ENCODE measurements at regions of chr6 and their contacts with region 1.

Region 1: DNA sequence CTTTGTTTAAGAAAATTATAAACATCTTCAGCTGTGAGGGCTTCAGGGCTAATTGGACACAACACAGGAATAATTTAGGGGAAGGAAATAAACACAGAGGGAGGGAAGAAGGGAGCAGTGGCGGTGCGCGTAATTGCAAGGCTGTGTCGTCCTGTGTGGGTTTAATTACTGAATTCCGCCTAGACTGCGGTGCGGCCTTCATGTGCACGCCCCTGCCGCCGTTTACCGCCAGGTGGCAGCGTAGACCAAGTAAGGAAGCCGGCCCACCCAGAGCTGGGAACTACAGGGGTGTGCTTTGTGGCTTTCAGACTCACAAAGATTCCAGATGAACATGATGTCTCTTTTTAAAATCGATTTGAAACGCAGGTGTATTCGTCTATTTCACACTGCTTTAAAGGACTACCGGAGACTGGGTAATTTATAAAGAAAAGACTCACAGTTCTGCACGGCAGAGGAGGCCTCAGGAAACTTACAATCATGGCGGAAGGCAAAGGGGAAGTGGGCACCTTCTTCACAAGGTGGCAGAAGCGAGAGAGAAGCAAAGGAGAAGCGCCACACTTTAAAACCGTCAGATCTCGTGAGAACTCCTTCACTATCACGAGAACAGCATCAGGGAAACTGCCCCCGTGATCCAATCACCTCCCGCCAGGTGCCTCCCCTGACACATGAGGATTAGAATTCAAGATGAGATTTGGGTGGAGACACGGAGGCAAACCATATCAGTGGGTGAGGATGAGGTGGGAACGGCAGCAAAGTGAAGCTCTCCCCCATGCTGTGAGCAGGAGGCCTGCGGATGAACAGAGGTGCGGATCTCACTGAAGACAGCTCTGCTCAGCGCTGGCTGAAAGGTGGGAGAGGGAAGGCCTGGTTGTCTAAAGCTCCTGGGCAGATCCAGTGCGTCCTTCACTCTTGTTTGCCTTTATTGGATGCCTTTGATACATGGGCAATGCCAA is 222.0 kb upstream of the PDE10A start:
- DNase-seq: peak; percentile 85
- ATAC-seq: peak; percentile 97
- H3K4me3 Mint-ChIP-seq: no peak overlapping the region
- H3K27ac Mint-ChIP-seq: no peak overlapping the region
- H3K4me1 Mint-ChIP-seq: peaks cover 7% of the 10 kb centered on the region
- H3K27me3 Mint-ChIP-seq: peaks cover 9% of the 10 kb centered on the region

Region 2: DNA sequence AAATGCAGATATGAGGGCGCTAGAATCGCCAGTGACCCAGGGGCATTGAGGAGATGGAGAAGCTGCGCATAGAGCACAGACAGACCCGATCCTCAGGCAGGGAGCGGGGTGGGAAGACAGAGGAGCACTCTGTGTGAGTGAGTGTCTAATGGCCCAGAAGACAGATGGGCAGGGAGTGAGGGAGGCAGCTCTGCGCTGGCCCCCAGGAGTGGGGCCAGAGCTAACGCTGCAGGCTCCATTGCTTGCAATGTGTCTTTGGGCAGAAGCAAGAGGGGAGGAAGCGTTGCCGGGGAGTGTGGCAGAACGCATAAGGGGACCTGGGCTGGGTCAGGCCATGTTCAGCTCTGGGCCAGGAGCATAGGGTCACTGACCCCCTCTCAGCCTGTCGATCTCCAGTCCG is 75.6 kb after region 1 on chr6:
- CTCF ChIA-PET with region 1: no interaction called
- POLR2A ChIA-PET with region 1: no interaction called
- intact Hi-C with region 1: no loop called
- DNase-seq: no peak
- ATAC-seq: no peak
- H3K4me3 Mint-ChIP-seq: no peak overlapping the region
- H3K27ac Mint-ChIP-seq: no peak overlapping the region
- H3K4me1 Mint-ChIP-seq: no peaks in the 10 kb centered on the region
- H3K27me3 Mint-ChIP-seq: no peaks in the 10 kb centered on the region

Region 3: GRCh38 chr6:166097915-166098522 is 212.9 kb after region 1 on chr6:
- CTCF ChIA-PET with region 1: interaction called, 4 read pairs
- POLR2A ChIA-PET with region 1: no interaction called
- intact Hi-C with region 1: loop called (anchors 1 to 2 kb)
- DNase-seq: peak; percentile 77
- ATAC-seq: peak; percentile 74
- H3K4me3 Mint-ChIP-seq: no peak overlapping the region
- H3K27ac Mint-ChIP-seq: no peak overlapping the region
- H3K4me1 Mint-ChIP-seq: no peaks in the 10 kb centered on the region
- H3K27me3 Mint-ChIP-seq: peaks cover 32% of the 10 kb centered on the region

Region 4: GRCh38 chr6:166106076-166106686 is 221.1 kb after region 1 on chr6:
- CTCF ChIA-PET with region 1: interaction called, 14 read pairs
- POLR2A ChIA-PET with region 1: no interaction called
- intact Hi-C with region 1: loop called (anchors 1 to 2 kb)
- DNase-seq: peak; percentile 84
- ATAC-seq: peak; percentile 83
- H3K4me3 Mint-ChIP-seq: no peak overlapping the region
- H3K27ac Mint-ChIP-seq: no peak overlapping the region
- H3K4me1 Mint-ChIP-seq: peaks cover 3% of the 10 kb centered on the region
- H3K27me3 Mint-ChIP-seq: peaks cover 9% of the 10 kb centered on the region

Measured in activated CD4-positive, alpha-beta T cell treated with anti-CD3 and anti-CD28 coated beads for 36 hours (primary cell).